ENCODE measurements at regions of chr11 and their contacts with region 1.

Region 1: DNA sequence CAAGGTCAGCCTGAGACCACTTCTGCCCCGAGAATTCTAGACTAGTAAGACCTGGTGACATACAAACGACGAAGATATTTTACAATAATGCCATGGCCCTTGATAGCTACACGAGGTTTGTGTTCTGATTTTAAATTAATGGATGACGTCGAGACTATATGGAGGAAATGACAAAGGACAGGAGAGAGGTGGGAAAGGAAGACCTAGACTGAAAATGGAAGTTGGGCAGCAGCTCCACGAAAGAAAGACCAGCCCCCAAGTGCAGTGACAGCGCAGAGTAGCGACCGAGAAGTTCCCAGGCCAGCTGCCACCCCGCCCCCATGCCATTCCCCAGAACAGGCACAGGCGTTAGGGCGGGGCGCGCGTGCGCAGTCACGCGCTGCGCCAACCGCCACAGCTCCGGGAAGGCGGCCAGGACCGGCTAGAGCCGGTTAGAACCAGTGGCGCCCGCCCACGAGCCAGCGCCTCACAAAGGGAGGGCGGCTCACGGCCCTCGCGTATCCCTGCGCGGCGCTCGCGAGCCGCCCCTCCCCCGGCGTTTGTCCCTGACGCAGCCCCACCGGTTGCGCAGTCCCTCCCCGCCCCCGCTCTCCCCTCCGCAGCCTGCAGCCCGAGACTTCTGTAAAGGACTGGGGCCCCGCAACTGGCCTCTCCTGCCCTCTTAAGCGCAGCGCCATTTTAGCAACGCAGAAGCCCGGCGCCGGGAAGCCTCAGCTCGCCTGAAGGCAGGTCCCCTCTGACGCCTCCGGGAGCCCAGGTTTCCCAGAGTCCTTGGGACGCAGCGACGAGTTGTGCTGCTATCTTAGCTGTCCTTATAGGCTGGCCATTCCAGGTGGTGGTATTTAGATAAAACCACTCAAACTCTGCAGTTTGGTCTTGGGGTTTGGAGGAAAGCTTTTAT is 1.5 kb upstream of the MALAT1 start:
- H3K4me3 ChIP-seq: peak overlapping the region; percentile 98
- H3K27ac ChIP-seq: peak overlapping the region; percentile 98
- H3K4me1 ChIP-seq: peaks cover 7% of the 10 kb centered on the region
- CTCF ChIP-seq: no peak; the same call in 1 of the 2 replicates

Region 2: DNA sequence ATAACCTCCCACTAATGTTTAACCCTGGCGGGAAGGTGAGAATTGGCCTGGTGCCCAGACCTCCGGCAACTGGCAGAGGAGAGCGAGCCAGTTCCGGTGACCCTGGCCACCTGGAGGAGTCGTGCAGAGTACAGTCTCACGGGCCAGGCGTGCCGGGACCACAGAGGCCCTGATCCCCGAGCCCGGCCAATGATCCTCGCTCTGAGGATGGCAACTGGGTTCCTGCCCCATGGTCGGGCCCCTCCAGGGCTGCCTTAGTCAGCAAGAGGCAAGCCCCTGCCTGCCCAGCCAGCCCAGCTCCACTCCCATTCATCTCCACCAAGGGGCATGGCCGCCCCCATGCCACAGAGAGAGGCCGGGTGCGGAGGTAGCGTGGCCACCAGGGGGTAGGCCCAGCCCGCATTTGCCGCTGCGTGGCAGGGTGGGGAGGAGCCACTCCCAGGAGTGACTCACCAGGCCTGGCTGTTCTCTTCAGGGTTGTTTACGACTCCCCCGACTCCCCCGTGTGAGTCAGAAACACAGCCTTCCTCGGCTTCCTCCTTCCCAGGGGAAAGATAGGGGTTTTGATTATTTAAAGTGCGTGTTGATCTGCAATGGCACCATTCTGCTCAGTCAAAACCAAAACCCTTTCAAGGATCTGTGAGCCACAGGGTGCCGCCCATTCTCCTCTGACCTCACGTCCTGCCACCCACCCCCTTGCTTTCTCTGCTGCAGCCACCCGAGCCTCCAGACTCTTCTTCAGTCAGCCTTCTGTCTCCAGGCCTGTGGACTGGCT is 115.2 kb before region 1 on chr11 and contains the start of gene SLC25A45:
- CTCF ChIA-PET with region 1: interaction called, 4 read pairs
- POLR2A ChIA-PET with region 1: interaction called, 14 read pairs
- H3K4me3 ChIP-seq: peak within 1 kb of the TSS; percentile 24
- H3K27ac ChIP-seq: peak within 1 kb of the TSS; percentile 93
- H3K4me1 ChIP-seq: peaks cover 6% of the 10 kb centered on the region; the same call in 1 of the 2 replicates
- CTCF ChIP-seq: peak; percentile 98

Region 3: DNA sequence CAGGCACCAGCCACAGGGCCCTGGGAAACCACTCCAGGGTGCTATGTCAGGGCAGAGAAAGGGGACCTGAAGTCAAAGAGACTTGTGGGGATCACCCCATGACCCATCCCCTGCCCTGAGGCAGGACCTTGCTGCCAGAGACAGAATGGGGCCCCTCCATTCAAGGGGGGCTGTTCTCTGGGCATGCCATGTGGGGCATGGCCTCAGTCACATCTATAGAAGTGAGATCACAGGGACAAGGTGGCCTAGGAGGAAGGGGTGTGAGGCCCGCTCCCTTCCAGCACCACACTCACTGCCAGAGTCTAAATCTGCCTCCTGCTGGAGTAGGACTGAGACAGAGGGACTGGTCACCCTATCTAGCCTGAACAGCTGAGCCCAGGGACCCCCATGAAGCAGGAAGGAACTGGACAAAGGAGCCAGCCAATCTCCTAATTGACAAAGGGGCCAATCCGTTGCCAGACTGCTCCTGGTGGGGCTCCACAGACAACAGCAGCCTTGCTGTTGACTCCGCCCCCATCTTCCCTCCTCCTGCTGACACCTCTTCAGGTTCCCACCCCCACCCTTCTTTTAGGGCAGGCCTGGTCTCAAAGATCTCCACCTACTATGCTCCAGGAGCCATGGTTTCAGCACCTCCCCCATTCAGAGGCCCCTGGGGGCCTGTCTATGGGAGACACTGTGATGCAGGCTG is 48.8 kb before region 1 on chr11:
- CTCF ChIA-PET with region 1: interaction called, 3 read pairs
- POLR2A ChIA-PET with region 1: interaction called, 69 read pairs
- H3K4me3 ChIP-seq: no peak overlapping the region
- H3K27ac ChIP-seq: no peak overlapping the region
- H3K4me1 ChIP-seq: no peaks in the 10 kb centered on the region
- CTCF ChIP-seq: no peak

Region 4: GRCh38 chr11:65477149-65477965 is 20.0 kb before region 1 on chr11:
- CTCF ChIA-PET with region 1: interaction called, 35 read pairs
- POLR2A ChIA-PET with region 1: interaction called, 560 read pairs
- H3K4me3 ChIP-seq: peak overlapping the region; percentile 98
- H3K27ac ChIP-seq: peak overlapping the region; percentile 93
- H3K4me1 ChIP-seq: no peaks in the 10 kb centered on the region
- CTCF ChIP-seq: 0 out of 2 replicates have a peak, but pooled peaks have one; percentile 15

Measured in HEK293 (cell line).